Caco-2 (cell line): ENCODE measurements at regions of chr9 and their contacts with region 1.

Region 1: DNA sequence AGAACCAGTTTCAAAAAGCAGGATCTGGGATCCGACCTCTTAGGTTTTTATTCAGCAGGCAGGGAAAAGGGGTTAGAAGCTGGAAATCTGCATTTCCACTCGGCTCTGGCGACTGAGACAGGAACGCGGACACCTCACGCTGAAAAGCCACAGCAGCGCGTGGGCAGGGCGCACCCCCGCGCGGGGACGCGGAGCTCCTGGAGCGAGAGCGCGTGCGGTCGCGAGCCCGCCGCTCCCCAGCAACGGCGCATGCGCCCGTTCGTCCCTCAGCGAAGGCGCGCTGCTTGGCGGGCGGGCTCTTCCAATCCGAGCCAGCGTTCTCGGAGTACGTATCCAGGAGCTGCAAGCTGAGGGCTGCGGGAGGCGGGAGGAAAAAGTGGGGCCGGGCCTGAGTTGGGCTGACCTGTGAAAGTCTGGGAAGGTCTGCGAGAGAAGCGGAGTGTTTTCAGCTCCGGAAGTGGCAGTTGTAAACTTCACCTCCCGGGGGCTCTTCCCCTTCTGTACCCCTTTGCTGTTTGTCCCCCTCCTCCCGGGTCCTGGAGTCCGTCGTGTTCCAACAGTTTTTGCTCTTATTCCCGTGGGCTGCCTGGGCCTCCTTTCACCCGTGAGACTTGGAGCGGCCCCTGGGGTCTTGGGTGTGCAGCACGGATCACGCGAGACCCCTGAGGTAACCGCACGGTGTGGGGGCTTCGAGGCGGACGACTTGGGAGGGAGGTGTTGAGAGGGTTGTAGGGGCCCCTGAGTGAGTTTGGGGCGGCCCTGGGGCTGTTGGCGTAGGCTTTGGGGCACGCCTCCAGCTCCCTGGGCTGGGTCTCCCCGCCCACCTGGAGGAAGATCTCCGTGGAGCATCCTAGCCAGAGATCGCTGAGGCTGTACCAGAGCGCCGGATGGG is at the start of gene CCDC171:
- DNase-seq: peak; percentile 91 to 92
- H3K4me3 ChIP-seq: peak within 1 kb of the TSS; percentile 63
- H3K4me3 Mint-ChIP-seq: peak within 1 kb of the TSS; percentile 92
- H3K27ac Mint-ChIP-seq: peak within 1 kb of the TSS; percentile 97
- H3K4me1 ChIP-seq: 0 out of 2 replicates have a peak, but pooled peaks cover 3% of the 10 kb centered on the region
- H3K4me1 Mint-ChIP-seq: no peaks in the 10 kb centered on the region
- H3K27me3 ChIP-seq: no peaks in the 10 kb centered on the region
- H3K27me3 Mint-ChIP-seq: peaks cover 4% of the 10 kb centered on the region
- CTCF ChIP-seq: no peak
- total RNA-seq, gene CCDC171: 1.1 and 1.6 TPM in 2 replicates

Region 2: GRCh38 chr9:15422372-15423230 is 130.3 kb before region 1 on chr9 and contains the start of gene SNAPC3:
- CTCF ChIA-PET with region 1: no interaction called
- POLR2A ChIA-PET with region 1: no interaction called
- intact Hi-C with region 1: loop called (anchors 2 kb)
- DNase-seq: peak; percentile 87 to 90
- H3K4me3 ChIP-seq: peak within 1 kb of the TSS; percentile 95
- H3K4me3 Mint-ChIP-seq: peak within 1 kb of the TSS; percentile 87
- H3K27ac Mint-ChIP-seq: peak within 1 kb of the TSS; percentile 91
- H3K4me1 ChIP-seq: peaks cover 11% of the 10 kb centered on the region
- H3K4me1 Mint-ChIP-seq: no peaks in the 10 kb centered on the region
- H3K27me3 ChIP-seq: no peaks in the 10 kb centered on the region
- H3K27me3 Mint-ChIP-seq: no peaks in the 10 kb centered on the region
- CTCF ChIP-seq: no peak
- total RNA-seq, gene SNAPC3: 18.3 and 21.1 TPM in 2 replicates

Region 3: DNA sequence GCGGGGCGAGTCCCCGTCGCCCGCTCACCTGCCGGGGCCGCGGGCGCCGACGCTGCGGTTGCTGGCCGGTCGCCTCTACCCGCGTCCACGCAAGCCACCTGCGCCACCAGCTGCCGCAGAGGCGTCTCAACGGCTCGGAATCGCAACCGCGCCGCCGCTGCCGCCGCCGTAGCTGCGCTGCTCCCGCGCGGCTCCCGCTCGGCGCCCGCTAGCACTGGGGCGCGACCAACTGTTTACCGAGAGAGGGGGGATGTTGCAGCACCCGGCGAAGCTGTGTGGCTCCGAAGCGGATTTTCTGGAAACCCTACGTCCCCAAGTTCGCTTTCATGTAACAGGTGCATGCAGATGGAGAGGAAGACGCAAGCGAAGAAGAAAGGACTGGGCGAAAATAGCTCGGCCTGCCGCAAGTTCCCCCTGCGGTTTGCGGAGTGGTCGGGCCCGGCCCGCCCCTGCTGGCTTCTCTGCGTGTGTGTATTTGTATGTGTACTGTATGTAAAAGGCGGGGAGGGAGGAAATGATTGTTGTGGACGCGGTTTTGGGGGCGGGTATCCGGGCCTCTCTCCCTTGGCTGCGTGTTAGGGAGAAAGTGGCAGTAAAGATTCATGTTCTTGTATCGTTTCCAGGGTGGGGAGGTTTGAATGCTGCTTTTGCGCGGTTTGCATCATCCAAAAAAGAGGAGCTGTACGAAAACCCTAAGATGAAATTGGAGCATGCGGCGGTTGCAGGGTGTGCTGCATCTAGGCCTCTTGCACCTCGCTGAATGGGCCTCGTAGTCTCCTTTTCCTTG is 41.9 kb before region 1 on chr9 and contains the start of gene PSIP1:
- CTCF ChIA-PET with region 1: no interaction called
- POLR2A ChIA-PET with region 1: interaction called, 6 read pairs
- intact Hi-C with region 1: loop called (anchors 1 kb)
- DNase-seq: peak; percentile 64 to 78
- H3K4me3 ChIP-seq: peak within 1 kb of the TSS; percentile 79
- H3K4me3 Mint-ChIP-seq: peak within 1 kb of the TSS; percentile 79
- H3K27ac Mint-ChIP-seq: peak within 1 kb of the TSS; percentile 100
- H3K4me1 ChIP-seq: peaks cover 4% of the 10 kb centered on the region; the same call in 1 of the 2 replicates
- H3K4me1 Mint-ChIP-seq: no peaks in the 10 kb centered on the region
- H3K27me3 ChIP-seq: no peaks in the 10 kb centered on the region
- H3K27me3 Mint-ChIP-seq: peaks cover 3% of the 10 kb centered on the region
- CTCF ChIP-seq: no peak
- total RNA-seq, gene PSIP1: 43.7 and 54.1 TPM in 2 replicates

Region 4: DNA sequence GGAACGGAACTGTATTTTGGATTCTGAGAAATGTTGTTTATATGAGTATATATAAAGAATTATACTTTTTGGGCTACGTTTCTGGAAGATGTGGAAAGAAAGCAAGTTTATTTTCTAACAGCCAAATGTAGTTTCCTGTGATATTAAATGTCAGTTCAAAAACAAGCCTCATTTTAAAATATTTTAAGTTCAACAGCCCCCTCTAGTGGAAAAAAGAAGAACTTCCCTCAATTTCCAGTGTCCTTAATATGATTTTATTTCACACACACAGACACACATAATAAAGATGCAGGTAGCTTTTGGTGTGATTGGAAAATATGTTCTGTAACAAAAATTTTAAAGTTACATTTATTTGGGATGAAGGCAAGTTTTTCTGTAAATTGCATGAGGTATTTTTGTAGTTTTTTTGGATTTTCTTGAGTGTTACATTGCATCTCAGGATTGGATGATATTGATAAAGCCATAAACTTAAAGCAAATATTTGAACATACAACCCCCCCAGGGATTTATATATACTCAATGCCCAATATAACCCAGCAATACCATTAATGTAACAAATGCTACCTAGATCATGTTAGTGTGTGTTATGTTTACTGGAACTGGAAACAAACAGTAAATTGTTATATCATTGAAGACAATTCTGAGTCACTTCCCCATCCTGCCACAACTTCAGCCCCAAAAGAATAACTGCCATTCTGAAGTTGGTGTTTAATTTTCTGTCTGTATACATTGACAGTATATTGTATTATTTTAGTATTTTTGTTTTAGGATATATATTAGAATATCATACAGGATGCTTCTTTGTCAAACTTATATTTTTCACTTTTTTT is 54.0 kb after region 1 on chr9:
- CTCF ChIA-PET with region 1: interaction called, 8 read pairs
- POLR2A ChIA-PET with region 1: no interaction called
- intact Hi-C with region 1: loop called (anchors 1 kb)
- DNase-seq: peak in 1 of 2 experiments; percentile 43
- H3K4me3 ChIP-seq: no peak overlapping the region
- H3K4me3 Mint-ChIP-seq: no peak overlapping the region
- H3K27ac Mint-ChIP-seq: no peak overlapping the region
- H3K4me1 ChIP-seq: no peaks in the 10 kb centered on the region
- H3K4me1 Mint-ChIP-seq: no peaks in the 10 kb centered on the region
- H3K27me3 ChIP-seq: no peaks in the 10 kb centered on the region
- H3K27me3 Mint-ChIP-seq: no peaks in the 10 kb centered on the region
- CTCF ChIP-seq: peak; percentile 12 to 26

Region 5: DNA sequence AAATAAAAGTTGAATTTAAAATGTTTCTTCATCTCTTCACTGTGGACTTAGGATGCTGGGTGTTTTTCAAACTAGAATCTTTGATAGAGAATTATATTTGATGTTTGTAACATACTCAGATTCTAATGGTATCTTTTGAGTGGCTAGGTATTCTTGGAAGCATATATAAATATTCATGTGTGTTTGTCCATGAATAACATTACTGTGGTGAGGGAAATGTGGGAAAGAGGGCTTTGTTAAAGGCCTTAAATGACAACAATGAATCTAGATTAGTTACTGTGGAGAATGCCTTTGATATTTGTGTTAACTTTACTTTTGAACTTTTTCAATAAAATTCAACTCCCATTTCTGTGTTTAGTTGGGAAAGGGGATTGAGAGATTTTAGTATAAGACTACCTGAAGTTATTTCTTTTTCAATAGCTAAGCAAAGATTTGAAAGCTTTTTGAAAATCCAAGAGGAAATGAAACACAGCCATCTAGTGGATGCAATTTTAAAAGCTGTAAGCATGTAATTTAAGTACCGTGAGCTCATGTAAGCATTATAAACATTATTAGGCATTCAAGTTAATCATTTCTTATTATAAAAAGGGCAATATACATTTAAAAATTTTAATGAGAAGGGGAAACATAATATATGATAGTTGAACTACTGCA is 69.6 kb after region 1 on chr9:
- CTCF ChIA-PET with region 1: interaction called, 13 read pairs
- POLR2A ChIA-PET with region 1: interaction called, 3 read pairs
- intact Hi-C with region 1: no loop called
- DNase-seq: no peak
- H3K4me3 ChIP-seq: no peak overlapping the region
- H3K4me3 Mint-ChIP-seq: no peak overlapping the region
- H3K27ac Mint-ChIP-seq: no peak overlapping the region
- H3K4me1 ChIP-seq: no peaks in the 10 kb centered on the region
- H3K4me1 Mint-ChIP-seq: no peaks in the 10 kb centered on the region
- H3K27me3 ChIP-seq: no peaks in the 10 kb centered on the region
- H3K27me3 Mint-ChIP-seq: no peaks in the 10 kb centered on the region
- CTCF ChIP-seq: peak in 1 of 2 experiments; percentile 20